Astrocyte of the spinal cord (primary cell): ENCODE measurements at regions of chr1 and their contacts with region 1.

Region 1: DNA sequence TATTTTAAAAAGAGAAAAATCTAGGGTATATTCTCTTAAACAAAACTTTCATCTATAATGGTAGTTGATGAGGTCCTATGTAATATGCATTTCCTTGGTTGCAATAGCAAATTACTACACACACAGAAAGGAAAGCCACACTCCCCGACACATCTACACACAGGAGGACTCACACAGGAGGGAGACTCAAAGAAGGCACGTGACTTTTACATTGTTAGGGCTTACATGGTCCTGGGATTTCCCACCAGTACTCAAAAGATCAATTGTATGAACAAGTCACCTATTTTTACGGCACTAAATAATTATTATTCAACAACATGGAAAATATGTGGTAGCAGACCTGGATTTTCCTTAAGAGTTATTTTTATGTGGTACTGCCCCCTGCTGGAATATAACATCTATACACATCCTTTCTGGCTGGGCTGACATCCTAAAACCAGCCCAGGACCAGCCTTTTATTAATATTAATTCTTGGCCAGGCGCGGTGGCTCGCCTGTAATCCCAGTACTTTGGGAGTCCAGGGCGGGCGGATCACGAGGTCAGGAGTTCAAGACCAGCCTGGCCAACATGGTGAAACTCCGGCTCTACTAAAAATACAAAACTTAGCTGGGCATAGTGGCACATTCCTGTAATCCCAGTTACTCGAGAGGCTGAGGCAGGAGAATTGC is 33.9 kb upstream of the LGALS8 start:
- DNase-seq: peak; percentile 57
- H3K4me3 ChIP-seq: no peak overlapping the region
- CTCF ChIP-seq: peak; percentile 42

Region 2: GRCh38 chr1:236137285-236137852 is 352.5 kb before region 1 on chr1:
- in situ Hi-C with region 1: loop called (anchors 10 kb)
- DNase-seq: no peak
- H3K4me3 ChIP-seq: no peak overlapping the region
- CTCF ChIP-seq: no peak

Region 3: DNA sequence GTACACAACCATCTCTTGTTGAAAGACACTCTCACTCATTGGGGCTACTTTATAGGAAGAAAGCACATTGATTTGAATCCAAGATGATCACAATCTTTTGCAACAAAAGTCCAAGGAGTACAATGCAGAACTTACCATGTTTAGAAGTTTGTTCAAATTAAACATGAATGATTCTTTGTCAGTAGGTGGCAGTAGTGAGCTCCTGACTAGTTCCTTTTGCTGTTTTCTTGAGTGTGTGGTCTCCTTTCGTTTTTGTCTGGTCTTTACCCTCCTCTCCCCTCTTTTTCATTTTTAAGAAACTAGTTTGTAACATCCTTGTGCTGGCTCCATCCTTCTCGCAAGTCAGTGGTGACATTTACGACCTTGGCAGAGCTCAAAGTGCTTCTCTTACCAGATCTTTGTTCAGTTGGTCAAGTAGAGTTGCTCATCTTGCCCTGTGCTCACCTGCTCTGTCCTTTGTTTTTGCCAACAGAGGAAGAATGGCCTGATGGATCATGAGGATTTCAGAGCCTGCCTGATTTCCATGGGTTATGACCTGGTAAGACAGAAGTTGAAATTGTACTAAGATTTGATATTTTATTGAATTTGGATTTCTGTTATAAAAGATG is 269.5 kb after region 1 on chr1:
- in situ Hi-C with region 1: no loop called
- DNase-seq: peak; percentile 55
- H3K4me3 ChIP-seq: no peak overlapping the region
- CTCF ChIP-seq: peak; percentile 66